IMR-90 (cell line): ENCODE measurements at regions of chr12 and their contacts with region 1.

Region 1: DNA sequence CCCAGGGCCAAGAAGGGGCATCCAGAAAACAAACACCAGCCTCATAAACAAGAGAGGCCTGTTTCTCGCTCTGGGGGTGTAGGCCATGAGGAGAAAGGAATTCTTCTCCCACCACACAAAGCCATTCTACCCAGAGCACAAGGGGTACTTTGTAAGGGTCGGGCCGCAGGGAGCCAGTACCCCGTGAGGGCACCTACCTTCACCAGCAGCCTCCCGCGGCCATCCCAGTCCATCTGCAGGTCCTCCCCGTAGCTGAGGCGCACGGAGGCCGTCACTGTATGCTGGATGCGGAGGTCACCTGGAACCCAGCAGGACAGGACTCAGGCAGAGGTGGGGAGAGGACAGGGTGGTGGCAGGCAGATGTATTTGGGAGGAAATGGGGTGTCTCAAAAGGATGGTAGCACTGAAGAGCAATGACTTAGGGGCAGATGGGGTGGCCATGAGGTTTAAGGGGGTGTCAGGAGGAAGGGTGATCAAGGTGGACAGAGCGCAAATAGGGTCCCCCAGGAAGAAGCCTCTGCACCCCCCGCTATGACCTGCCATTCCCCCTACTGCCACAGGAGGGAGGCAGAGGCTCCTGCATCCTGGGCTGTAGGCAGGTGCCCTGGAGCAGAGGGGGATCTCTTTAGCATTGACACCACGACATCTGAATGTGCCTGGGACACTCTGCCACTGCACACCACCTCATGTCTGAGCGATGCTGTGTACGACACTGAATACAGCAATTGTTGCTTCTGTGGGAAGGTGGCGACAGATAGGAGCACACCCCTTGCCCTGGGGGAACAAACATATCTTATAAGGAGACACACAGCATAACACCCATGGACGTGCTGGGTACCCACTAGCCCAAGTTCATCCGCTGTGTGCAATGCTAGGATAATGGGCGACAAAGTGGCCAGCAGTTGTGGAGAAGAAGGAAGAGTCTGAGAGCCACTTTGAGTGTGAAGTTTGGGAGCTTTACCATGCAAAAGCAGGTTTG is 61.4 kb downstream of the VWF start:
- DNase-seq: peak; percentile 48
- ATAC-seq: peak; percentile 91
- H3K4me3 ChIP-seq: no peak overlapping the region
- H3K27ac ChIP-seq: no peak overlapping the region; the same call in 1 of the 2 replicates
- H3K4me1 ChIP-seq: peaks cover 21% of the 10 kb centered on the region
- H3K27me3 ChIP-seq: no peaks in the 10 kb centered on the region
- CTCF ChIP-seq: peak; percentile 94
- POLR2A ChIP-seq: 0 out of 2 replicates have a peak, but pooled peaks have one; percentile 38
- RAD21 ChIP-seq: peak; percentile 98

Region 2: GRCh38 chr12:5856692-5857091 is 206.4 kb before region 1 on chr12:
- CTCF ChIA-PET with region 1: no interaction called
- POLR2A ChIA-PET with region 1: no interaction called
- dilution Hi-C with region 1: no loop called
- in situ Hi-C with region 1: no loop called
- intact Hi-C with region 1: no loop called
- DNase-seq: no peak
- ATAC-seq: no peak
- H3K4me3 ChIP-seq: no peak overlapping the region
- H3K27ac ChIP-seq: no peak overlapping the region
- H3K4me1 ChIP-seq: no peaks in the 10 kb centered on the region
- H3K27me3 ChIP-seq: peaks cover 25% of the 10 kb centered on the region
- CTCF ChIP-seq: no peak
- POLR2A ChIP-seq: no peak
- RAD21 ChIP-seq: no peak

Region 3: GRCh38 chr12:6182116-6182898 is 119.3 kb after region 1 on chr12:
- CTCF ChIA-PET with region 1: no interaction called
- POLR2A ChIA-PET with region 1: no interaction called
- dilution Hi-C with region 1: no loop called
- in situ Hi-C with region 1: loop called (anchors 5 kb)
- intact Hi-C with region 1: loop called (anchors 5 kb)
- DNase-seq: peak; percentile 68
- ATAC-seq: peak; percentile 24
- H3K4me3 ChIP-seq: no peak overlapping the region
- H3K27ac ChIP-seq: peak overlapping the region; percentile 38
- H3K4me1 ChIP-seq: peaks cover 33% of the 10 kb centered on the region
- H3K27me3 ChIP-seq: no peaks in the 10 kb centered on the region
- CTCF ChIP-seq: no peak
- POLR2A ChIP-seq: no peak
- RAD21 ChIP-seq: no peak

Region 4: GRCh38 chr12:6278439-6279255 is 215.6 kb after region 1 on chr12:
- CTCF ChIA-PET with region 1: interaction called, 3 read pairs
- POLR2A ChIA-PET with region 1: interaction called, 4 read pairs
- dilution Hi-C with region 1: no loop called
- in situ Hi-C with region 1: loop called (anchors 5 kb)
- intact Hi-C with region 1: loop called (anchors 1 kb)
- DNase-seq: peak; percentile 74
- ATAC-seq: peak; percentile 81
- H3K4me3 ChIP-seq: peak overlapping the region; percentile 56
- H3K27ac ChIP-seq: peak overlapping the region; percentile 78
- H3K4me1 ChIP-seq: peaks cover 31% of the 10 kb centered on the region
- H3K27me3 ChIP-seq: no peaks in the 10 kb centered on the region
- CTCF ChIP-seq: peak; percentile 92
- POLR2A ChIP-seq: peak; percentile 50; the same call in 1 of the 2 replicates
- RAD21 ChIP-seq: peak; percentile 83

Region 5: GRCh38 chr12:6285063-6285477 is 222.0 kb after region 1 on chr12:
- CTCF ChIA-PET with region 1: interaction called, 5 read pairs
- POLR2A ChIA-PET with region 1: interaction called, 4 read pairs
- dilution Hi-C with region 1: no loop called
- in situ Hi-C with region 1: no loop called
- intact Hi-C with region 1: loop called (anchors 1 kb)
- DNase-seq: peak; percentile 76
- ATAC-seq: peak; percentile 56
- H3K4me3 ChIP-seq: no peak overlapping the region
- H3K27ac ChIP-seq: no peak overlapping the region
- H3K4me1 ChIP-seq: peaks cover 18% of the 10 kb centered on the region
- H3K27me3 ChIP-seq: no peaks in the 10 kb centered on the region
- CTCF ChIP-seq: peak; percentile 96
- POLR2A ChIP-seq: peak; percentile 44; the same call in 1 of the 2 replicates
- RAD21 ChIP-seq: peak; percentile 99

Region 6: GRCh38 chr12:6461401-6462233 is 398.6 kb after region 1 on chr12:
- CTCF ChIA-PET with region 1: no interaction called
- POLR2A ChIA-PET with region 1: no interaction called
- dilution Hi-C with region 1: no loop called
- in situ Hi-C with region 1: loop called (anchors 5 kb)
- intact Hi-C with region 1: no loop called
- DNase-seq: peak; percentile 45
- ATAC-seq: no peak
- H3K4me3 ChIP-seq: no peak overlapping the region
- H3K27ac ChIP-seq: no peak overlapping the region
- H3K4me1 ChIP-seq: no peaks in the 10 kb centered on the region
- H3K27me3 ChIP-seq: no peaks in the 10 kb centered on the region
- CTCF ChIP-seq: no peak
- POLR2A ChIP-seq: no peak
- RAD21 ChIP-seq: no peak